IMR-90 (cell line): ENCODE measurements at regions of chr18 and their contacts with region 1.

Region 1: DNA sequence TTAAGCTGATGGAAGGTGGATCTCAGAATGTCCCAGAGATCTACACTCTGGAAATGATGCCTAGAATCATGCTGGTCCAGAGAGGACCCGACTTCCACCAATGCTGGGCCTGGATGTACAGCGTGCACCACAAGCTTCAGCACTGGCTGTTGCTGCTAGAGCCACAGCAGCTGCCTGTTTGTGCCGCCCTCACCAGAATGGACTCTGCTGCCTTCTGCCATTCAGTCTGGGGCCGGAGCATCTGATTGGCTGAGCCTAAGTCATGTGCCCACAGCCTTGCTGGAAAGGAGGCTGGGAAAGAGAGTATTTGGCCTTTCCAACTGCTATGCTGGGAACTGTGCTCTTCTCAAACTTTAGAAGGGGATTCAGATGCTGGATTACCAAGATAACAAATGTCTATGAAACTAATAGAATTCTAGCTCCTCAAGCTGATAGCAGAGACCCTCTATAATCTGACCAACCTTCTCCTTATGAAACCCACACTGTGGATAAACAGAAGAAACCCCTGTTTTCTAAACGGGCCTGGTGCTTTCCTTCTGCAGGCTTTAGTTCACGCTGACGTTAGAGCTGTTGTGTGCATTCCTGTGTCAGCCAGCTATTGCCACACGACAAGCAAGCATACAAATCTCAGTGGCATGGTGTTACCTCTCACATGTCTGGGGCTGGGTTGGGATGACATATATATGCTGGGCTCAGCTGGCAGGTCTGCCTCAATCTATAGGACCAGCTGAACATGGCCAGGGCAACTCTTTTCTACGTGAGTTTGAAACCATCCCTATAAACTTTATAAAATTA is 4.1 kb upstream of the LOXHD1 start:
- DNase-seq: peak; percentile 31
- ATAC-seq: peak; percentile 65
- H3K4me3 ChIP-seq: no peak overlapping the region
- H3K27ac ChIP-seq: no peak overlapping the region
- H3K4me1 ChIP-seq: no peaks in the 10 kb centered on the region
- H3K27me3 ChIP-seq: peaks cover 4% of the 10 kb centered on the region; the same call in 1 of the 2 replicates
- CTCF ChIP-seq: no peak
- POLR2A ChIP-seq: no peak
- RAD21 ChIP-seq: no peak

Region 2: DNA sequence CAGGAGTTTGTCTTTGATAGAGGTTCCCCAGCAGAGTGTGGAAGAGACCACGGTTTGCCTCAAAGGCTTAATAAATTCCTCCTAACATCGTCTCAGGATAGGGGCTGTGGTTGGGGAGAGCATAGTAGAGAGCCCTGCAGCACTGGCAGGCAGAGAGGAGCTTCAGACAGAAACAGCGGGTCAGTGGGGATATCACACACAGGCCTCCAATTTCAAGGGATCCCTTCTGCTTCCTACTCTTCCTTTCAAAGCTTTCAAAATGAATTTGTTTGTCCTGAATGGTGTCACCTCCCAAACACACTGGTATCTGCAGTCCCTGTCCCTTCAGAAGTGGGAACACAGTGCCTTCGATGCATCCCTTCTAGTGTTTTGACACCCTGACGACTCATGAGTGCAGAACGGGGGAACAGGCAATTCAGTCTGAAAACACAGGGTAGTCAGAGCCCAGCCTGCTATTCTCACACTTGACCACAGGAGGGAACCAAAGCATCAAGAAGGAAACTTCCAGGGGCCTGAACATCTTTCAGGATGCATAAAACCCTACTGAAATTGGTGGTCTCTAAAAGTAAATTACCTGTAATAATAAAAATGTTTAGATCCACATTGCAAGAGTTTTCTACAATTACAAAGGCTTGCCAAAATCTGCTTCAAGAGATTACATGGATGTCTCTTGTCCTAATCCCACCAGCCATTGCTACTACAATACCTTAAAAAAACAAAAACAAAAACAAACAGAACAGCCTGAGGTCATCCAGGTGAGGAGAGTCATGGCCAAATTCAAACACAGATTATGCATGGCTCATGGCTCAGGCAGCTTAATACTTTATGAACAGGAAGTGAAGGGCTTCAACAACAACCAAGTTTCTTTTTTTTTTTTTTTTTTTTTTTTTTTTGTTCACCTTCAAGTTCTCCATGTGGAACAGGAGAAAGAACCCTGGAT is 996.1 kb before region 1 on chr18:
- CTCF ChIA-PET with region 1: no interaction called
- POLR2A ChIA-PET with region 1: no interaction called
- dilution Hi-C with region 1: no loop called
- in situ Hi-C with region 1: loop called (anchors 25 kb)
- intact Hi-C with region 1: no loop called
- DNase-seq: peak; percentile 68
- ATAC-seq: peak; percentile 81
- H3K4me3 ChIP-seq: no peak overlapping the region
- H3K27ac ChIP-seq: no peak overlapping the region
- H3K4me1 ChIP-seq: peaks cover 8% of the 10 kb centered on the region
- H3K27me3 ChIP-seq: no peaks in the 10 kb centered on the region
- CTCF ChIP-seq: peak; percentile 94
- POLR2A ChIP-seq: peak; percentile 39; the same call in 1 of the 2 replicates
- RAD21 ChIP-seq: peak; percentile 96

Region 3: DNA sequence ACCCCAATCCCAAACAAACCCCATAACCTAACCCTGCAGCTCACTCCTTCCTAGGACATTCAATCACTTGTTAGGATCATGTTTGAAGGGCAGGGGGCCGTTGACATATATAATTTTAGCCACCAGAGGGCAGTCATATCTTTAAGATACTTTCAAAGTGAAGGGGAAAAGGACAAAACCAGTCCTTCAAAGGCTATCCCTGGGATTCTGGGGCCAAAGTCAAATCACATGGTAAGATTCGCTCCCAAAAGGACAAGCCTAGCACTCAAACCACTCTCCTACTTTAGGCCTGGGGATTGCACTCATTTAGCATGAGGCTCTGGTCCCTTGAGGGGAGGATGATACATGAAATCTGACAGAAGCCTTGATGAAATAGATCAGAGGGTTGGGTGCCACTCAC is 512.3 kb before region 1 on chr18:
- CTCF ChIA-PET with region 1: interaction called, 4 read pairs
- POLR2A ChIA-PET with region 1: no interaction called
- dilution Hi-C with region 1: no loop called
- in situ Hi-C with region 1: loop called (anchors 5 kb)
- intact Hi-C with region 1: loop called (anchors 1 kb)
- DNase-seq: peak; percentile 59
- ATAC-seq: peak; percentile 64
- H3K4me3 ChIP-seq: no peak overlapping the region
- H3K27ac ChIP-seq: no peak overlapping the region
- H3K4me1 ChIP-seq: peaks cover 13% of the 10 kb centered on the region
- H3K27me3 ChIP-seq: no peaks in the 10 kb centered on the region
- CTCF ChIP-seq: peak; percentile 76
- POLR2A ChIP-seq: no peak
- RAD21 ChIP-seq: peak; percentile 75

Region 4: GRCh38 chr18:46281185-46282176 is 379.7 kb before region 1 on chr18:
- CTCF ChIA-PET with region 1: interaction called, 6 read pairs
- POLR2A ChIA-PET with region 1: no interaction called
- dilution Hi-C with region 1: no loop called
- in situ Hi-C with region 1: no loop called
- intact Hi-C with region 1: loop called (anchors 1 kb)
- DNase-seq: peak; percentile 79
- ATAC-seq: peak; percentile 94
- H3K4me3 ChIP-seq: no peak overlapping the region
- H3K27ac ChIP-seq: no peak overlapping the region
- H3K4me1 ChIP-seq: peaks cover 14% of the 10 kb centered on the region
- H3K27me3 ChIP-seq: no peaks in the 10 kb centered on the region
- CTCF ChIP-seq: peak; percentile 83
- POLR2A ChIP-seq: no peak
- RAD21 ChIP-seq: peak; percentile 91

Region 5: DNA sequence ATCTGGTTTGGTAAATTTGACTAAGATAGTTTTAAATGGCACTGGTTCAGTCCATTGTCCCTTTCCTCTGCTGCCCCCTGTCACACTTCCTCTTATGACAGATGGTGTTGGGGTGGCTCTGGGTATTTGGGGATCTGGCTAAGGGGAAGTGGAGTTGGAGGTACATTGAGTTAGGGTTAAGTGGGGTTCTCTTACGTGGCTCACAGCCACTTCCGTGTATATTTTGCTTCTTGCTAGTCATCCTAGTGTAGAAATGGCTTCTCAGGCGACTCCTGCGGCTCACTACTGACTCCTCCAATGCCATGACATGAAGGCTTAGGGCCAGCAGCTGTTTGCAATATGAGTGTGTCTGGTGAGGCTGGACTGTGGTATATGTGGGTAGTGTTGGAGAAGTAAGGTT is 370.0 kb before region 1 on chr18:
- CTCF ChIA-PET with region 1: no interaction called
- POLR2A ChIA-PET with region 1: no interaction called
- dilution Hi-C with region 1: no loop called
- in situ Hi-C with region 1: loop called (anchors 10 kb)
- intact Hi-C with region 1: no loop called
- DNase-seq: no peak
- ATAC-seq: no peak
- H3K4me3 ChIP-seq: no peak overlapping the region
- H3K27ac ChIP-seq: no peak overlapping the region
- H3K4me1 ChIP-seq: no peaks in the 10 kb centered on the region
- H3K27me3 ChIP-seq: no peaks in the 10 kb centered on the region; the same call in 1 of the 2 replicates
- CTCF ChIP-seq: no peak
- POLR2A ChIP-seq: no peak
- RAD21 ChIP-seq: no peak

Region 6: GRCh38 chr18:46555724-46556123 is 105.4 kb before region 1 on chr18:
- CTCF ChIA-PET with region 1: no interaction called
- POLR2A ChIA-PET with region 1: no interaction called
- dilution Hi-C with region 1: no loop called
- in situ Hi-C with region 1: no loop called
- intact Hi-C with region 1: loop called (anchors 1 kb)
- DNase-seq: peak; percentile 3
- ATAC-seq: peak; percentile 44; the same call in 1 of the 2 replicates
- H3K4me3 ChIP-seq: no peak overlapping the region
- H3K27ac ChIP-seq: no peak overlapping the region
- H3K4me1 ChIP-seq: no peaks in the 10 kb centered on the region
- H3K27me3 ChIP-seq: no peaks in the 10 kb centered on the region
- CTCF ChIP-seq: peak; percentile 17; the same call in 1 of the 2 replicates
- POLR2A ChIP-seq: no peak
- RAD21 ChIP-seq: no peak

Region 7: GRCh38 chr18:47050468-47050867 is 389.3 kb after region 1 on chr18:
- CTCF ChIA-PET with region 1: no interaction called
- POLR2A ChIA-PET with region 1: no interaction called
- dilution Hi-C with region 1: no loop called
- in situ Hi-C with region 1: no loop called
- intact Hi-C with region 1: no loop called
- DNase-seq: peak; percentile 60
- ATAC-seq: peak; percentile 66
- H3K4me3 ChIP-seq: no peak overlapping the region
- H3K27ac ChIP-seq: no peak overlapping the region
- H3K4me1 ChIP-seq: no peaks in the 10 kb centered on the region
- H3K27me3 ChIP-seq: no peaks in the 10 kb centered on the region; the same call in 1 of the 2 replicates
- CTCF ChIP-seq: peak; percentile 67
- POLR2A ChIP-seq: no peak
- RAD21 ChIP-seq: peak; percentile 63